B cell (primary cell): ENCODE measurements at regions of chr10 and their contacts with region 1.

Region 1: DNA sequence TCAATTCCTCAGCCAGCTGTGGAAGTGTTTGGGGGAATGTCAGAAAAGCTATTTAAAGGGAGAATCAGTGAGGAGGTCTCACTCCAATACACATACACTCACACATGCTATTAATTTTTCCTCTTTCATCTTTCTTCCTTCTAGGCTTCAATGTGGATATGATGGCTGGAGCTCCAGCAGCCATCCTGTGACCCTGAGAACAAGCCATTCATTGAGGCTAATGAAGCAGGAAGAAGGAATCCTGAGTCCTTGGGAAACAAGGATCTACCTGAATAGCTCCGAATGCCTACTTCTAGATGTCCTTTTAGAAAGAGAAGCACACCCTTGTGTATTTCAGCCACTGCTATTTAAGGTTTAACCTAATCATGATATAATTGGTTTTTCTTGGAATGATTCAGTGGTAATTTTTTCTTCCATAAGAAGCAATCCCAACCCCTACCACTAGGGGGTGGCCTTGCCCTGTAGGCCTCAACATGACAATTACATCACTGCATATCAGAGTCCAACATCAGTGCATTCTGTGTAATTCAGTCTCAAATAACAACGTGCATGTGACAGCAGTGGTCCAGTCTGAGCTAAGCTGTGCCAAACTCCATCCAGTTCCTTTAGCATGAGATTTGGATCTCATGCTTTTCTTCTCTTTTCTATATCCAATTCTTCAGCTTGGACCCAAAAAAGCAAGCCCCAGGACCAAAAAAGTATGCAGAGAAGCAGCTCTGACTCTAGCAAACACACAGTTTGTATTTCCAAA is 85.3 kb upstream of the ANKRD1 start:
- DNase-seq: peak; percentile 79
- ATAC-seq: peak; percentile 89
- H3K4me3 ChIP-seq: peak overlapping the region in 3 of 5 experiments; percentile 2 to 47 (median 15)
- H3K4me3 Mint-ChIP-seq: peak overlapping the region; percentile 78
- H3K27ac ChIP-seq: peak overlapping the region; percentile 74 to 79
- H3K27ac Mint-ChIP-seq: peak overlapping the region; percentile 87
- H3K4me1 ChIP-seq: peaks cover 35 to 38% of the 10 kb centered on the region in 2 donors
- H3K4me1 Mint-ChIP-seq: peaks cover 40% of the 10 kb centered on the region
- H3K27me3 ChIP-seq: no peaks in the 10 kb centered on the region
- H3K27me3 Mint-ChIP-seq: no peaks in the 10 kb centered on the region
- CTCF ChIP-seq: peak; percentile 98

Region 2: GRCh38 chr10:90912174-90912573 is 94.0 kb before region 1 on chr10:
- CTCF ChIA-PET with region 1: interaction called, 17 read pairs
- POLR2A ChIA-PET with region 1: no interaction called
- intact Hi-C with region 1: loop called (anchors 5 kb)
- DNase-seq: no peak
- ATAC-seq: no peak
- H3K4me3 ChIP-seq: no peak overlapping the region
- H3K4me3 Mint-ChIP-seq: no peak overlapping the region
- H3K27ac ChIP-seq: no peak overlapping the region
- H3K27ac Mint-ChIP-seq: no peak overlapping the region
- H3K4me1 ChIP-seq: no peaks in the 10 kb centered on the region
- H3K4me1 Mint-ChIP-seq: peaks cover 2% of the 10 kb centered on the region
- H3K27me3 ChIP-seq: no peaks in the 10 kb centered on the region
- H3K27me3 Mint-ChIP-seq: no peaks in the 10 kb centered on the region
- CTCF ChIP-seq: no peak

Region 3: GRCh38 chr10:91017198-91017597 is 11.0 kb after region 1 on chr10:
- CTCF ChIA-PET with region 1: interaction called, 22 read pairs
- POLR2A ChIA-PET with region 1: no interaction called
- intact Hi-C with region 1: no loop called
- DNase-seq: no peak
- ATAC-seq: no peak
- H3K4me3 ChIP-seq: no peak overlapping the region
- H3K4me3 Mint-ChIP-seq: no peak overlapping the region
- H3K27ac ChIP-seq: no peak overlapping the region
- H3K27ac Mint-ChIP-seq: no peak overlapping the region
- H3K4me1 ChIP-seq: no peaks in the 10 kb centered on the region
- H3K4me1 Mint-ChIP-seq: peaks cover 3% of the 10 kb centered on the region
- H3K27me3 ChIP-seq: no peaks in the 10 kb centered on the region
- H3K27me3 Mint-ChIP-seq: no peaks in the 10 kb centered on the region
- CTCF ChIP-seq: no peak

Region 4: DNA sequence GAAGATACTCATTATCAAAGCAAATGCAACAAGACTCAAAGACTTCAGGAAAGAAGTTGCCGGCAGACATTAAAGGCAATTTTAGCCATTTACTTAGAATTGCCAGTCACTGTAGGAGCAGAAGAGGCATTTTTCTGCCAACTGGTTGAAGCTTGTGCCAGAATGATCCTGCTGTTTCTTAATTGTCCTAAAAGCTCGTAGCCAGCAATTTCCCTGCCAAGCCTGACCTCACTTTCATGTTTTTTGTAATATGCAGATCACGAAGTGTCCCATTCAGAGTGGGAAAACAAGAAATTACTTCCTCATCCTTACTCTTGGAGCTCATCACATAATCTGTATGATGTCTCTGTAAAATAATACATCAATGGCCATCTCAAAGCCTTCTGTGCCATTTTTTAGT is 45.7 kb after region 1 on chr10:
- CTCF ChIA-PET with region 1: interaction called, 12 read pairs
- POLR2A ChIA-PET with region 1: no interaction called
- intact Hi-C with region 1: no loop called
- DNase-seq: no peak
- ATAC-seq: no peak
- H3K4me3 ChIP-seq: no peak overlapping the region
- H3K4me3 Mint-ChIP-seq: no peak overlapping the region
- H3K27ac ChIP-seq: no peak overlapping the region
- H3K27ac Mint-ChIP-seq: no peak overlapping the region
- H3K4me1 ChIP-seq: no peaks in the 10 kb centered on the region
- H3K4me1 Mint-ChIP-seq: no peaks in the 10 kb centered on the region
- H3K27me3 ChIP-seq: no peaks in the 10 kb centered on the region
- H3K27me3 Mint-ChIP-seq: no peaks in the 10 kb centered on the region
- CTCF ChIP-seq: no peak

Region 5: DNA sequence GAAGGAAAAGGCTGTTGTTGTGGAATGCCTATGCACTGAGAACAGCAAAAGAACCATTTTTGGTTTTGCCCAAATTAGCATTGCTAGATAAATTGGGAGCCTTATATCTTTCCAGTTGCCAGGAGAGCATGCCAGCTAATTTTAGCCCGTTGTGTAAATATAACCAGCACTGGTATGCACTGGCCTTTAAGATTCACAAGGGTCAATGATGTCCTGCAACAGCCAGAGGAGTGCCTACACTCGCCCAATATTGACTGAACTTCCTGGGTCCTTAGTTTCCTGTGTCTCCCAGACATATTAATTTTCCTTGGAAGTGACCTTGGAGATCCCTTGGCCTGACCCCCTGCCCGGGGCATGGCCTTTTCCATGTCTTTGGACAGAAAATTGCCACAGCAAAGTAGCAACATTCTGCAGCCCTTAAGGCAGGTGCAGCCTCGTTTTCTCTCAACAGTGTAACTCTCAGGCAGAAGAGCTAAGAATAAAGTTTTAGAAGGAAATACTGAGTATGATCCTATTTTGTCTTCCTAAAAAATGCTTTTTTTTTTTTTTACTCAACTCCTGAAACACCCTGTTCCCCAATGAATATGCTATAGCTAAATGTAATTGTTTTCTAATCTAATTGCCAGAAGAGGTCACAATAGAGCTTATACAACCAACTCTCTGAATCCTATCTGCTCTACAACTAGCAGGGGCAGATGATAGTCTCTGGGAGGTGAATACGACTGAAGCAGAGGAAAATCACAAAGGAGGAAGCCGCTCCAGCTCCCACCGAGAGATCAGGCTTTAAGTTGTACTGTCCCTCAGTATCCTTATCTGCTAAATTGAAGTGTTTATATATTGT is 82.3 kb after region 1 on chr10:
- CTCF ChIA-PET with region 1: interaction called, 43 read pairs
- POLR2A ChIA-PET with region 1: no interaction called
- intact Hi-C with region 1: loop called (anchors 2 kb)
- DNase-seq: peak; percentile 57
- ATAC-seq: peak; percentile 79
- H3K4me3 ChIP-seq: no peak overlapping the region
- H3K4me3 Mint-ChIP-seq: no peak overlapping the region
- H3K27ac ChIP-seq: no peak overlapping the region
- H3K27ac Mint-ChIP-seq: no peak overlapping the region
- H3K4me1 ChIP-seq: no peaks in the 10 kb centered on the region
- H3K4me1 Mint-ChIP-seq: peaks cover 3% of the 10 kb centered on the region
- H3K27me3 ChIP-seq: no peaks in the 10 kb centered on the region
- H3K27me3 Mint-ChIP-seq: no peaks in the 10 kb centered on the region
- CTCF ChIP-seq: peak; percentile 48

Region 6: GRCh38 chr10:91289305-91289704 is 283.1 kb after region 1 on chr10:
- CTCF ChIA-PET with region 1: no interaction called
- POLR2A ChIA-PET with region 1: no interaction called
- intact Hi-C with region 1: no loop called
- DNase-seq: no peak
- ATAC-seq: no peak
- H3K4me3 ChIP-seq: no peak overlapping the region
- H3K4me3 Mint-ChIP-seq: no peak overlapping the region
- H3K27ac ChIP-seq: no peak overlapping the region
- H3K27ac Mint-ChIP-seq: no peak overlapping the region
- H3K4me1 ChIP-seq: no peaks in the 10 kb centered on the region
- H3K4me1 Mint-ChIP-seq: no peaks in the 10 kb centered on the region
- H3K27me3 ChIP-seq: no peaks in the 10 kb centered on the region
- H3K27me3 Mint-ChIP-seq: no peaks in the 10 kb centered on the region
- CTCF ChIP-seq: no peak

Region 7: DNA sequence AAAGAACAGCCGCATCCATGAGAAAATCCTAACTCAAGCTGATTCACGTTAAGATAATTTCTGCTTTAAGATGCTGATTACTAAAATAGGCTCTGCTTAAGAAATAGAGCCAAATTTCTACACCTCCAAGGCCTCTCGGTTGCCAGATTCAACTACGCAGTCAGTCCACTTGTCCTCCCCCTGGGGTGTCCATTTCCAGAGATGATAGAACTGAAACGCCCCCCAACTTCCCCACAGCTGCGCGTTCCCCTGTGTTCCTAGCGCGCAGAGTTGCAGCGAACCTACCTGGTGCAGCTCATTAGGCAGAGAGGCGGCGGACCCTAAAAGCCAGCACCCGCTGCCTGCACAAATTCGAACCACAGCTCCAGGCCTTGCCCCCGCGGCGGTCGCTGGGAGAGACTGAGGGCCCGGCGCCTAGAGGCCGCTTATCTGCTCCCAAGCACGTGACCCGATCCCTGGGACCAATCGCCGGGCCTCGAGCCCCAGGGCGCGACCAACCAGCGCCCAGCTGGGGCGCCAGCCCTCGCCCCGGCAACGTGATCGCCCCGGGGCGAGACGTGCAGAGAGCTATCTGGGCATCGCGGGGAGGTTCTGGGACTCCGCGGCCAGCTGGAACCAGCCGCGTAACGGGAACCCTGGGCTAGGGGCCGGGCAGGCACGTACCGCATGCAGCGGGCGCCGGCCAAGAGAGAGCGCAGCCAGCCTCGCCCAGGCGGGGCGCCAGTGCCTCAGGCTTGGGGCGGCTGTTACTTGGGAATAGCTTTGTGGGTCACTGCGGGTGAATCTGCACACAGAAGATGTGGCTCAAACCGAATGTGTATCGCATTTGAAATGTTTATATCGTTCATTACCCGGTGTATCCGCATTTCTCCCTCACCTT is 626.7 kb after region 1 on chr10 and contains the start of gene PPP1R3C:
- CTCF ChIA-PET with region 1: interaction called, 19 read pairs
- POLR2A ChIA-PET with region 1: no interaction called
- intact Hi-C with region 1: loop called (anchors 1 kb)
- DNase-seq: peak; percentile 44
- ATAC-seq: peak; percentile 73
- H3K4me3 ChIP-seq: peak within 1 kb of the TSS in 4 of 5 experiments; percentile 25 to 52 (median 36)
- H3K4me3 Mint-ChIP-seq: peak within 1 kb of the TSS; percentile 75
- H3K27ac ChIP-seq: no peak within 1 kb of the TSS
- H3K27ac Mint-ChIP-seq: no peak within 1 kb of the TSS
- H3K4me1 ChIP-seq: peaks cover 12 to 16% of the 10 kb centered on the region in 2 donors
- H3K4me1 Mint-ChIP-seq: peaks cover 17% of the 10 kb centered on the region
- H3K27me3 ChIP-seq: peaks cover 0 to 36% (median 16%) of the 10 kb centered on the region in 4 experiments
- H3K27me3 Mint-ChIP-seq: peaks cover 66% of the 10 kb centered on the region
- CTCF ChIP-seq: no peak
- total RNA-seq, gene PPP1R3C: not detected in 2 replicates